Mammary epithelial cell (primary cell): ENCODE measurements at regions of chr14 and their contacts with region 1.

Region 1: DNA sequence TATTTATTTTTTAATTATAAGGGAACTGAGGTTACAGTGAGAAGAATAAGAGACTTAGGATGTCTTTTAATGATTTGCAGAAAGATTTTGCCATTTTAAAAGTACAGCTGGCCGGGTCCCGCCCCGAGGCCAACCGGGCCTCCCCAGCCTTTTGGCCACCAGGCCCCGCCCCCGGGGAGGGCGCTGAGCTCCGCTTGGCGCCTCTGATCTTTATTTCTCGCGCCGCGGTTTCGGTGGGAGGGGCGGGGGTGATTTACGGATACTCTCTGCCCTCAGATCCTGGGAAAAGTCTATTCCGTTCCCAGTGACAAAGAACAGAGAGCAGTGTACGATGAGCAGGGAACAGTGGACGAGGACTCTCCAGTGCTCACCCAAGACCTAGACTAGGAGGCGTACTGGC is 17.7 kb downstream of the ZFYVE26 start:
- DNase-seq: no peak
- H3K4me3 ChIP-seq: no peak overlapping the region
- H3K27ac ChIP-seq: no peak overlapping the region
- H3K4me1 ChIP-seq: no peaks in the 10 kb centered on the region
- H3K27me3 ChIP-seq: no peaks in the 10 kb centered on the region
- CTCF ChIP-seq: no peak

Region 2: DNA sequence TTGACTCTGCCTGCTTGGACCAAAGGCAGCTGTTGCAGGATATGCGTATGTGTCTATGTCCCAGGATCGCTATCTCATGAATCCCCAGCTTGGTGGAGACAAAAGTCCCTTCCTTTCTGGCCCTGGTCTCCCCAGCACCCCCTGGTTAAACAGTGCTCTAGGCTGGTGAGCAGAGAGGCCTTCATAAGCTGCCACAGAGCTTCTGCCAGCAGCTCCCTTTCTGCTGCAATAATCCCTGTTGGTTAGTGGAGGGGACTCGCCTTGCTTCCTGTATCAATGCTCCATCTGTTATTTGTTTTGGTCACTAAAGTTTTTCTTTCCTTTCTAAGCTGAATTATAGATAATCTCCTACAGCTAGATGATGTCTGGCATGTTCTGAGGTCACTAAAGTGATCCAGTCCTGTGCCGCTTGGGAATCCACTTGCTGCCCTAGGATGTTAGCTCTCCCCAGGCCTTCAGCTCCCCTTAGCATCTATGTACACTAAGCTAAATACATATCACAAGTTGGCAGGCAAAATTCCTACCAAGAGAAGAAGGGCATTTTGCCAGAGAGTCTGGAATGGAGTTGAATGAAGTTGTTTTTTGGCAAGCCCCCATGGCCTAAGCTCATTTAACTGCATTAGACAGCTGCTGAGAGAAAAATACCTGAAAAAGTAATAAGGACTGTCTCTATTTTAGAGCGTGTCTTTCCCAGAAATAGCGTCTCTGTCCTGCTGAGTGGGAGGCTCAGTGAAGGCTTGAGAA is 49.2 kb before region 1 on chr14:
- CTCF ChIA-PET with region 1: no interaction called
- dilution Hi-C with region 1: loop called (anchors 5 kb)
- in situ Hi-C with region 1: no loop called
- intact Hi-C with region 1: no loop called
- DNase-seq: no peak
- H3K4me3 ChIP-seq: no peak overlapping the region
- H3K27ac ChIP-seq: no peak overlapping the region
- H3K4me1 ChIP-seq: no peaks in the 10 kb centered on the region
- H3K27me3 ChIP-seq: no peaks in the 10 kb centered on the region
- CTCF ChIP-seq: no peak

Region 3: GRCh38 chr14:68392393-68393141 is 593.8 kb after region 1 on chr14:
- CTCF ChIA-PET with region 1: no interaction called
- dilution Hi-C with region 1: no loop called
- in situ Hi-C with region 1: no loop called
- intact Hi-C with region 1: no loop called
- DNase-seq: no peak
- H3K4me3 ChIP-seq: no peak overlapping the region
- H3K27ac ChIP-seq: no peak overlapping the region
- H3K4me1 ChIP-seq: peaks cover 11% of the 10 kb centered on the region
- H3K27me3 ChIP-seq: no peaks in the 10 kb centered on the region
- CTCF ChIP-seq: no peak